AG04449 (cell line): ENCODE measurements at regions of chr19 and their contacts with region 1.

Region 1: DNA sequence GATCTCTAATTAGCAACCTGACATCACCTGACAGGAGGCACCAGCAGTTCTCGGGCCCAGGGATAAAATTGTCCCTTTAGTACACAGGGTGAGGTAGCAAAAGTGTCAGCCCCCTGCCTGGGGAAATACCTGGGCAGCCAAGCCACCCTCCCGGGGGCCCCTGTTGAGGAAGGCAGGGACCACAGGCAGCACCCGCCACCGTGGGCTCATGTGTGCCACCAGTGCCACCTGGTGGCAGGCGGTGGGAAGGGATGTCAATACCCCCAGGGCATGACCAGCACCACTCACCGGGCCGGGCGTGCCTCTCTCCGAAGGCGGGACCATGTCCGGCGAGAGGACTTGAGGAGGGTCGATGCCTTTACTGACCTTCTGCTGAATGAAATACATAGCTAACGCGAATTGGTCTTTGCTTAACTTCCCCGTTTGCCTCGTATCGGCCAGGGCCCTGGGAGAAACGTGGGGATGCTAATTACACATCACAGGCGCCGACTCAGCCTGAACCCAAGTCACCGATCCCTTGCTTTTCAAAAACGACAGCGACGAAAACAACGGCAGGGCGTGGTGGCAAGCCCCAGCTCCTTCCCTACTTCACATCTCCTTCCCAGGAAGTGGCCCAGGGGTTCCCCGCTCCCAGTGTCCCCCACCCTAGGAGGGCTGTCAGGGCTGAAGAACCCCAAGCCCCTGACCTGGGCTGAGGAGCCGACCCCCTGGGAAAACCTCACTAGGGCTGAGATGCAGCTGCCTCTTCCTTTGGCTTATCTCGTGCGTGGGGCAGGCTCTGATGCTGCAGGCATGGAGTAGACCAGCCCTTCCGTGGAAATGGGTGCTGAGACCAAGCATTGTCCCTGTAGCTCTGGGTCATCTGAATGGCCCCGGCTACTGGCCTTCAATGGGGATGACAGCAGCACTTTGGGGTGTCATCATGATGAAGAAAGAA is 53.8 kb downstream of the EPS15L1 start:
- DNase-seq: no peak
- H3K4me3 ChIP-seq: no peak overlapping the region
- CTCF ChIP-seq: peak; percentile 87

Region 2: DNA sequence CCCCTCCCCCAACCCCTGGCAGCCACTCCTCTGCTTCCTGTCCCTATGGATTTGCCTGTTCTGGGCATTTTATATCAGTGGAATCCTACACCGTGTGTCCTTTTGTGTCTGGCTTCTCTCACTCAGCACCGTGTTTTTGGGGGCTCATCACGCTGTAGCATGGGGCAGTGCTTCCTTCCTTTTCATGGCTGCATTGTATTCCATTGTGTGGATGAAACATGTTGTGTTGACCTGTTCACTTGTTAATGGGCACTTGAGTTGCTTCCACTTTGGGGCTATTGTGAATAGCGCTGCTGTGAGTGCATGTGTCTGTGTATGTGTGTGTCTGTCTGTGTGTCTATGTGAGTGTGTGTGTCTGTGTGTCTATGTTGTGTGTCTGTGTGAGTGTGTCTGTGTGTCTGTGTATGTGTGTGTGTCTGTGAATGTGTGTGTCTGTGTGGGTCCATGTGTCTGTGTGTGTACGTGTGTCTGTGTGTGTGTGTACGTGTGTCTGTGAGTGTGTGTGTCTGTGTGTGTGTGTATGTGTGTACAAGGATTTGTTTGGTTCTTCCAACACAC is 163.0 kb before region 1 on chr19:
- CTCF ChIA-PET with region 1: no interaction called
- POLR2A ChIA-PET with region 1: no interaction called
- DNase-seq: no peak
- H3K4me3 ChIP-seq: no peak overlapping the region
- CTCF ChIP-seq: no peak

Region 3: DNA sequence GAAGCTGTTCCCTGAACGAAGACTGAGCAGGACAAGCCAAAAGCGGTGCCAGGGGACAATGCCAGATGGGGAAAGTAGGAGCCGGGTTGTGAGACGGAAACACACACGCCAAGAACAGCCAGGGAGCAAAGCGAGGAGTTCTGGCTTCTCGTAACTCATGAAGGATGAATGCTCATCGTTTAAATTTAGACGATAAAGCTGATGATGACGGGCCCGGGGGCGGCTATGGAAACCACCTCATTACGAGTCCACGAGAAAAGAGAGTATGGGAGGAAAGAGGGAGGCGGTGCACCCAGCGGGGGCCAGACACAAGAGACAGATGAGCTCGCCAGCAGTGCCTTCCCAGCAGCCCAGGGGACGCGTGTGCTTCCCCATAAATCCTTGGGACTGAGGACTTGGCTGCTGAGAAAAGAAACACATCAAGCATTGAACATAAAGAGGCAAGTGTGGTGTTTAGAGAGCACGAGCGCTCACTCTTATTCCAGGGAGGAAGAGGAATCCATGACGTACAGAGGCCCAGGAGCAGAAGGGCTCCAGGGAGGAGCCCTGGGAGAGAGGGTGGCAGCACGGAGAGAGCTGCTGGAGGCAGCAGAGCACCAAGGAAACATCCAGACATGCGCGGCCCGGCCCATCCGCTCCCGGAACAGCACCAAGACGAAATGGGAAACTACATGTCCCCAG is 16.9 kb before region 1 on chr19:
- CTCF ChIA-PET with region 1: interaction called, 17 read pairs
- POLR2A ChIA-PET with region 1: no interaction called
- DNase-seq: no peak
- H3K4me3 ChIP-seq: no peak overlapping the region
- CTCF ChIP-seq: no peak

Region 4: DNA sequence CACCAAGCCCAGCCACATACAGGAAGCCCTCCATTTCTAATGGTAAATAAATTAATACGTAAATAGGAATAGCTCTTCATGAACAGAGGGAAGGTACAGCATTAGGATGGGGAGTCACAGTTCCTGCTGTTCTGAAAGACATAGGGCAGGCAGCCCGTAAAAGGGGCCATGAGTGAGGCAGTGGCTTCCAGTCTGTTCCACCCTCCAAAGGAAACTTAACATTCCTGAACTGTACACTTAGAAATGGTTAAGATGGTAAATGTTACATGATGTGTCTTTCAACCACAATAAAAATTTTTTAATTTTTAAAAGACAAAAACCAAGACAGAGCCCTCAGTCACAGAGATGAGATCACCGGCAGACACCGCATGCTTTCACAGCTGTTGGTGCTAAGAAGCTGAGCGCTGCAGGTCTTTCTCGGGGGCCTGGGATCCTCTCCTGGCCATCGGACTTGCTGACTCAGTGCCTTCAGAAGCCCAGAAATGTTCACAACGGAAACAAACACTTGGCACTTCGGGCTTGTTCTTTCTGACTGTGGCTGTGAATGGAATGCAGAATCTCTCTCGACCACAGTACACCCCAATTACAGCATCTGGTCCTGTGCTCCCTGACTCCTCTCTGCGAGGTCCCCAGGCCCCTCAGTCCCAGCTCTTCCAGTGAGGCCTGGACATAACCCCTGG is 17.4 kb after region 1 on chr19:
- CTCF ChIA-PET with region 1: interaction called, 29 read pairs
- POLR2A ChIA-PET with region 1: no interaction called
- DNase-seq: peak; percentile 84
- H3K4me3 ChIP-seq: no peak overlapping the region; the same call in 1 of the 2 replicates
- CTCF ChIP-seq: no peak